ENCODE measurements at regions of chr17 and their contacts with region 1.

Region 1: DNA sequence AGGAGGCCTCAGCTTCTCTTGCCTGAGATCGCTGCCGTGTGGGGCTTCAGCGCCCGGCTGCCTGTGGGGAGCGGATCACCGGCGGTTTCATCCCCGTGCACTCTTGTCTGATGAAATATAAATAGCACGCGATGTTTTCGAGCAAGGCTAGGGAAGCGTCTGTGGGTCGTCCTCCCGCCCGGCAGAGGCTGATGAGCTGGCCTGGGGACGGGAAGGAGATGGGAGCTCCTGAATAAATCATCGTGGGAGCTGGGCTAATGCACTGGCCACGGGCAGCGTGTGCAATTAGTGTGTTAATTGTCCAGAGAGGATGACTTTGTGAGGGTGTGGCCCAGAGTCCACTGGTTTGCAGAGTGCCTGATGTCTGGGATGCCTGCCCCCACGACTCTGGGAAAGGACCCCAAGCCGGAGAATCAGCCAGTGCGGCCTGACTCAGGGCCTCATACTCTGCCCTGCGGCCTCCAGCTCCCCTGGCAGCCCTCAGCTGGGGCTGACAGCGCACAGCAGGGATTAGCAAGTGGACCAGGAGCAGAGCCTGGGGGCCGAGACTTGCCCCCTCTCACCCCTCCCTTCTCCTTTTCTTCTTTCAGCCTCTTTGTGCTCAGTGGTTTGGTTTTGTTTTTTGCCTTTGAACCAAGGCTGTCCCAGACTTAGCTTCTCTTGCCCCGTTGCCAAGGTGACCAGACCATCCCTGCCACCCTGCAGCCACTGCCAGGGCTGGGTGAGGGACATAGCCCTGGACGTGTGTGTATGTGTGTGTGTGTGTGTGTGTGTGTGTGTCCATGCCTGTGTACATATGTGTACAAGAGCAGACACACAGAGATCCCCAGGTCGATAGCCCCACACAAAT is 21.4 kb downstream of the KCNJ12 start:
- DNase-seq: peak in 1 of 3 donors; percentile 52
- ATAC-seq: no peak
- H3K4me3 ChIP-seq: no peak overlapping the region
- H3K27ac ChIP-seq: peak overlapping the region; percentile 21
- H3K4me1 ChIP-seq: peaks cover 3% of the 10 kb centered on the region
- H3K27me3 ChIP-seq: no peaks in the 10 kb centered on the region

Region 2: DNA sequence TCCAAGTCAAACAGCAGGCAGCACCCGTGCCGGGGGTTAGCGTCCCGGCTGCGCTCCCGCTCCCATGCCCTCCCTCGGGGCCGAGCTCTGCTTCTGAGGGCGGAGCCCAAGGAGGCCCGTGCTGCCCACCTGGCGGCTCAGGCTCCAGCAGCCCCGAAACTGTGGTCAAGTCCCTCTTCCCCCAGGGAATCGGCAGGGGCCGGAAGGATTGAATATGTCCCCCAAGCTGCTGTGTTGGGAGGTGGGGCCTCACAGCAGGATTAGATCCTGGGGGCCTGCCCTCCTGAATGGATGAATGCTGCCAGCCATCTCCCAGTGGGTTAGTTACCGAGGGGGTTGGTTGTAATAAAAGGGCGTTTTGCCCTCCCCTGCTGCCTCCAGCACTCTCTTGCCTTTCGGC is 79.1 kb before region 1 on chr17:
- intact Hi-C with region 1: no loop called
- DNase-seq: peak in 1 of 3 donors; percentile 69
- ATAC-seq: no peak
- H3K4me3 ChIP-seq: no peak overlapping the region
- H3K27ac ChIP-seq: no peak overlapping the region
- H3K4me1 ChIP-seq: no peaks in the 10 kb centered on the region
- H3K27me3 ChIP-seq: no peaks in the 10 kb centered on the region

Region 3: GRCh38 chr17:21445091-21445650 is 47.6 kb after region 1 on chr17:
- intact Hi-C with region 1: loop called in 1 of 4 experiments (anchors 10 kb)
- DNase-seq: no peak
- ATAC-seq: no peak
- H3K4me3 ChIP-seq: no peak overlapping the region
- H3K27ac ChIP-seq: no peak overlapping the region
- H3K4me1 ChIP-seq: no peaks in the 10 kb centered on the region
- H3K27me3 ChIP-seq: no peaks in the 10 kb centered on the region